ENCODE measurements at regions of chr12 and their contacts with region 1.

Region 1: DNA sequence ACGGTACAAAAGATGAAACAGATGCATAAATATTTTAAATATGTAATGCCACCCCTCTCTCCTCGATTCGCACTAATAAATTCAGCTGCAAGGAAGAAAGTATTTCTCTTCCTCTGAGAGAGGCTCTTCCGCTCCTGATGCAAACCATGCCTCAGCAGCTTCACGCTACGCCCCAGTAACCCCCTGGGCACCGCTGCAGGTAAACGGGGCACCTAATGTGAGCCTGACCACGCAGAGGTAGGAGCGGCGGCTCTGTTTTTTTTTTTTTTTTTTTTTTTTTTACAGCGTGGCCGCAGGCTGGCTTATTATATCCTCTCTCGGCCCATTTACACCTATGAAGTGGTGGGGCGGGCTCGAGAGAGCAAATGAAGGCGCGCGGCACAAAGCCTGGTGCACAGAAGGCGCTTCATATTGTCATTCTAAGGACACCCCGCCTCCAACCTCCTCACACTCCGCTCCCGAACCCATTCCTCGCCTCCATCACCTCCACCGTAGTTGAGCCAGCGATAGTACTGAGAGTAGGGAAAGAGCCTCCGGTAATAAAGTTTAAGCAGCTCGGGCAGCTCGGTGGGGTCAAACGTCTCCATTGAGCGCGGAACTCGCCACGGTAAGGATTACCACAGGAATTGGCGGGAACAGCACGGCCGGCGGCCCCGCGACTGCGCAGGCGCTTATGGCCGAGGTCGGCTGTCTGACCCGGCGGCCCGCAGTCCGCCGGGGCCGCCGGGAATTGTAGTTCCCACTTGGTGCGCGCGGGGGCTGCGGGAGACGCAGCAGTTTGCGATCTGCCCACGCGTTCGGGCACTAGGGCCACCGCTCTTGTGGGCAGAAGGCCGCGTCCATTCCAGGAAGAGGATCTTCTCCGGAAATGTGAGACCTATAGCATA is at the start of gene PRIM1:
- DNase-seq: peak; percentile 66
- ATAC-seq: peak; percentile 95
- H3K4me3 ChIP-seq: peak within 1 kb of the TSS; percentile 82
- H3K27ac ChIP-seq: peak within 1 kb of the TSS; percentile 68
- H3K4me1 ChIP-seq: no peaks in the 10 kb centered on the region
- H3K27me3 ChIP-seq: no peaks in the 10 kb centered on the region
- CTCF ChIP-seq: no peak
- POLR2A ChIP-seq: no peak
- RAD21 ChIP-seq: no peak
- total RNA-seq, gene PRIM1: 12.0 and 15.3 TPM in 2 replicates

Region 2: DNA sequence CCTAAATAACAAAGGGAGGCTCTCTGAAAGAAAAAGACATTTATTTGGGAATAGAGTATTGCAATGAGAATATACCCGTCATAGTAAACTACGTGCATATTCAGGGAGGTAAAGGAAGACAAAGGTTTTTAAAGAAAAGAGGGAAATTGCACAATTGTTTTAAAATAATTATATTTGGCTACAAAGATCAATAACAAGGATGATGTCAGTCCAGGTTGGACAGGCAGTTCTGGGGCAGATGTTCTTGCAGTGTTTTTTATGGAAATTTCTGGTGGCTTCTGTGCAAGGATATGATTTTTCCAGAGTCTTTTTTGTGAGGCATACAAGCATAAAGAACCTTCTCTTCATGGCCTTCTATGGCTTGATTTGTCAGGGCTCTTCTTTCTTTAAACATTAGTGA is 40.7 kb after region 1 on chr12:
- CTCF ChIA-PET with region 1: no interaction called
- POLR2A ChIA-PET with region 1: no interaction called
- dilution Hi-C with region 1: no loop called
- in situ Hi-C with region 1: no loop called
- intact Hi-C with region 1: no loop called
- DNase-seq: no peak
- ATAC-seq: no peak
- H3K4me3 ChIP-seq: no peak overlapping the region
- H3K27ac ChIP-seq: no peak overlapping the region
- H3K4me1 ChIP-seq: no peaks in the 10 kb centered on the region
- H3K27me3 ChIP-seq: no peaks in the 10 kb centered on the region
- CTCF ChIP-seq: no peak
- POLR2A ChIP-seq: no peak
- RAD21 ChIP-seq: no peak

Region 3: DNA sequence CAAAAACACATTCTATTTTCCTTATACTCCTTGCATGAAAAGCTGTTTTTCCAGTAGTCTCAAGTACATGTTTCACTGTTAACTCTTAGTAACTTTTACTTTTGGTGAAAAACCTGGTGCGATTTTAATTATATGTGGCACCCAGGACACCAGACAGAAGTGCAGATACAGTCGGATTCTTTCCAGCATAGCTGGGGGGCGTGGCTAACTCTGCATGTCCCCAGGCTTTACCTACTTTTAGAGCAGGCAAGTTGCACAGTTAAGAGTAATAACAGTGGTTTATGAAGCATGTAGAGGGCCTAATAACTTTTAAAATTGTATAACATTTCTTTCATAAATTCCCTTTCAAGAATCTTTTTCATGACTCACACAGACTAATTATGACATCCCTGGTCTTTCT is 81.8 kb after region 1 on chr12:
- CTCF ChIA-PET with region 1: no interaction called
- POLR2A ChIA-PET with region 1: no interaction called
- dilution Hi-C with region 1: no loop called
- in situ Hi-C with region 1: no loop called
- intact Hi-C with region 1: loop called (anchors 1 kb)
- DNase-seq: no peak
- ATAC-seq: peak; percentile 48
- H3K4me3 ChIP-seq: no peak overlapping the region
- H3K27ac ChIP-seq: no peak overlapping the region
- H3K4me1 ChIP-seq: peaks cover 6% of the 10 kb centered on the region
- H3K27me3 ChIP-seq: peaks cover 4% of the 10 kb centered on the region
- CTCF ChIP-seq: no peak
- POLR2A ChIP-seq: no peak
- RAD21 ChIP-seq: no peak

Measured in IMR-90 (cell line).